ENCODE measurements at regions of chr16 and their contacts with region 1.

Region 1: DNA sequence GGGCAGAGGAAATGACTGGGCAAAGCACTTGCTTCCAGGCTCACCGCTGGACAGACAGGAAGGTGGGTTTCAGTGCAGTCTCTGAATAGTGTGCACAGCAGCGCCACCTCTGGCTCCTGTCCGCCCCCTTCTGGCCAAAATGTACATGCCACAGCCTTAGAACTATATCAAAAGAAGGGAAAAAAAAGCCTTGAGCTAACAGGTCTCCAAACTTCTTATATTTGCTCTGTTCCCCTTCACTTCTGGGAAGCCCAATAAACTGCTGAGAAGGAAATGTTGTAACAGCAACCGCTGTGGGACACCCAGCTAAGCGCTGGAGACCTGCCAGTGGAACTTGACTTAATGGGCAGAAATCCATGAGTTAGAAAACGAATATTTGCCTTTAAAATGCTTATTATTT is 17.5 kb downstream of the COG7 start:
- DNase-seq: no peak
- H3K4me3 ChIP-seq: no peak overlapping the region
- CTCF ChIP-seq: peak; percentile 86

Region 2: DNA sequence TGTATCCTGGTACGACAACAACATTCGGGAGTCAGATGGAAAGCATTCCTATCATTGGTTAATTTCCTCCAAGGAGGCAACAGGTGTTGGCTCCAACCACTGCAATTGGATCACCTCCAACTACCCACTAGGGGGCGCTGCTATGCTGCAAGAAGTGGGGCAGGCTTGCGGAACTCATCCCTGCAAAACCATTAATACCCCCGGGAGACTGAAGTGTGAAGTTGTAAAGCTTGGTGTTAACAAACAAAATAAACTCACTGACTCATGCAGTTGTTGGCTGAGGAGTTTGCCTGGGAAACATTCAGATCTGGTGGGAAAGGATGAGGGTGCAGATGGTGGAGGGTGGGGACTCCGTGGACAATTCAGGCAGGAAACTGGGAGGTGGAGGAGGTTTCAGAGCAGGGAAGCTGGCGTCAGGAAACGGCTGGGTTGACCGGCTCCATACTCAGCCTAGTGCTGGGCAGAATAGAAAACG is 536.6 kb before region 1 on chr16:
- CTCF ChIA-PET with region 1: interaction called, 21 read pairs
- POLR2A ChIA-PET with region 1: no interaction called
- DNase-seq: no peak
- H3K4me3 ChIP-seq: no peak overlapping the region
- CTCF ChIP-seq: peak; percentile 52

Region 3: GRCh38 chr16:23131931-23132621 is 303.4 kb before region 1 on chr16:
- CTCF ChIA-PET with region 1: interaction called, 28 read pairs
- POLR2A ChIA-PET with region 1: no interaction called
- DNase-seq: no peak
- H3K4me3 ChIP-seq: no peak overlapping the region
- CTCF ChIP-seq: no peak

Region 4: GRCh38 chr16:23182460-23183309 is 252.8 kb before region 1 on chr16 and contains the start of gene SCNN1G:
- CTCF ChIA-PET with region 1: interaction called, 245 read pairs
- POLR2A ChIA-PET with region 1: no interaction called
- DNase-seq: no peak
- H3K4me3 ChIP-seq: peak within 1 kb of the TSS; percentile 18
- CTCF ChIP-seq: peak; percentile 85

Region 5: DNA sequence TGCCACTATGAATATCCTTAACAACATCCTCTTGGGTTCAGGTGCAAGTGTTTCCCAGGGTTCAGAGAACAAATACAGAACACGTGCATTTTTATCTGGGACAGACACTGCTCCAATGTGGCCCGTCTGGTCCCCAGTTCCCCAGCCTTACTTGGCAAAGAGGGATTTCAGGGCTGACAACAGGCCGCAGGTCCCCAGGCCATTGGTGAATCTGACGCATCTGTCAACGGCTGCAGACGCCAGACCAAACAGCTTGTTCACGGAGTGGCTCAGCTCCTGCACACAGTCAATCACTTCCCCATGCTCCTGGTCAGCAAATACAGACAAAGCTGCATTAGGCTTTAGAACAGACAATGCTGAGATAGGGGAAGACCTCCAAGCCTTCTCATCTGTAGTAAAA is 18.7 kb before region 1 on chr16:
- CTCF ChIA-PET with region 1: interaction called, 36 read pairs
- POLR2A ChIA-PET with region 1: no interaction called
- DNase-seq: no peak
- H3K4me3 ChIP-seq: no peak overlapping the region
- CTCF ChIP-seq: no peak

Region 6: GRCh38 chr16:23466066-23466885 is 30.8 kb after region 1 on chr16:
- CTCF ChIA-PET with region 1: interaction called, 27 read pairs
- POLR2A ChIA-PET with region 1: no interaction called
- DNase-seq: peak; percentile 57
- H3K4me3 ChIP-seq: no peak overlapping the region
- CTCF ChIP-seq: no peak

Region 7: GRCh38 chr16:23570992-23571632 is 135.6 kb after region 1 on chr16:
- CTCF ChIA-PET with region 1: no interaction called
- POLR2A ChIA-PET with region 1: no interaction called
- DNase-seq: no peak
- H3K4me3 ChIP-seq: no peak overlapping the region
- CTCF ChIP-seq: no peak